ENCODE measurements at regions of chr10 and their contacts with region 1.

Region 1: DNA sequence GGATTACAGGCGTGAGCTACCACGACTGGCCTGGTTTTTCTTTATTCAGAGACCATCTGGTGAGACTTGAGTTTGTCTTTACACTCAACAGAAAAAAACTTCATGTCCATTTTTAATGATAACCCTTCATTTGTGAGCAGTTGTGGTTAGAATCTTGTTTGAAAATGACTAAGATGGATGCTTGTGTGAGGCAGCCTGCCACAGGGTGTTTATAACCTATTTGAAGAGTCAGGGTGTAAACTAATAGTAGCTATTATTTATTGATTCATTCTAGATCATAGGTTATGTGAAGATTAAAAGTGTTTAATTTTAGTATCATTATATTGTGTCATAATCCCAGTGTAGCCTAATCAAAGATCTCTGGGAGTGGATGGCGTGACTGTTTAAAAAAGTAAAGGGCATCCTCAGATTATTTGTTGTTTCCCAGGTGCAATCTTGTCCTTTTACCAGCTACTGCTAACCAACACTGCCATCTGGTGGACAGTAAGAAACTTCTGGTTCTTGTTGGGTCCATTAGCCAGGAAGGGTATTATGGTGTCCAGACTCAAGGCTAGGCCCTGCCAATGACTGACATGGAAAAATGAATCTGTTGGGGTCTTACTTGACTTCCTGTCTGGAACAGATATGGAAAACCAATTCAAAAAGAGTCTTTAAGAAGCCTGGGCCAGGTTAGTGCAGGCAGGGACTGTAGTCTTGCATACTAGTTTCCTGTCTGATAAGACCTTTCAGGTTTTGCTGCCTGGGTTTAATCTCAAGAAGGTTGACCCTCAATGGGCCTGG is 24.9 kb downstream of the NRBF2 start:
- DNase-seq: peak in 8 of 9 experiments; percentile 13 to 88 (median 48)
- ATAC-seq: peak; percentile 74
- H3K4me3 ChIP-seq: no peak overlapping the region
- H3K4me3 Mint-ChIP-seq: no peak overlapping the region
- H3K27ac ChIP-seq: no peak overlapping the region
- H3K27ac Mint-ChIP-seq: no peak overlapping the region
- H3K4me1 ChIP-seq: no peaks in the 10 kb centered on the region
- H3K4me1 Mint-ChIP-seq: peaks cover 11% of the 10 kb centered on the region
- H3K27me3 ChIP-seq: no peaks in the 10 kb centered on the region
- H3K27me3 Mint-ChIP-seq: no peaks in the 10 kb centered on the region
- CTCF ChIP-seq: peak; percentile 79

Region 2: DNA sequence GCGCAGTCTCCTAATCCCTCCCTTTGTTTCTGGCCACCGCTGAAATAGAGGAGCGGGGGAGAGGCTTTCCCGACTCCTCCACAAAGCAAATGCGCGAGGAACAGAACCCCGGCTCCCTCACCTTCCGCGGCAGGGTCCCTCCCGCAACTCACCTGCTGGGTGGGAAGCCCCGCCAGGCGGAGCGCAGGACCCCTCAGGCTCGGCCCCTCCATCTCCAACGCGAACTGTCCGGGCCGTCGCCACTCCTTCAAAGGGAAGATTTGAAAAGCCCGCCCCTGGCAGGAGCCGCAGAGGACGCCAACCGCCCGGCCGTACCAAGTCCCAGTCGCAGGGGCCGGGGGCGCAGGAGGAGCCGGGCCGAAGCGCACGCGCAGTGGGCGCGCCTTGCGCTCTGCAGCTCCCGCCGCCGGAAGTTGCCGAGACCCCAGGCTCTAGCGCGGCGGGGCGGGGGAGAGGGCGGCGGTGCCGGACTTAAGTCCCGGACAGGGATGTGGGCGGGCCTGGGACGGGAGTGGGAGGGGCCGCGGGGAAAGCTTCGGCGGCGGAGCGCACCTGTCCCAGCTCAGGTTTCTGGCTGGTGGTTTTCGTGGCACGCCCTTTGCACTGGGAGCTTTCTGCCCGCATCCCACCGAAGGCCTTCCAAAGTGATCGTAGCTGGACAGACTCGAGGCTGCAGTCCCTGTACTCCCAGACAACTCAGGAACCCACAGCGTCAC is 889.5 kb before region 1 on chr10 and contains the start of gene RTKN2:
- CTCF ChIA-PET with region 1: no interaction called
- POLR2A ChIA-PET with region 1: no interaction called
- intact Hi-C with region 1: loop called in 1 of 2 experiments (anchors 5 kb)
- DNase-seq: peak; percentile 34 to 78 (median 55)
- ATAC-seq: peak; percentile 82
- H3K4me3 ChIP-seq: peak within 1 kb of the TSS; percentile 58 to 64
- H3K4me3 Mint-ChIP-seq: peak within 1 kb of the TSS; percentile 80
- H3K27ac ChIP-seq: no peak within 1 kb of the TSS
- H3K27ac Mint-ChIP-seq: no peak within 1 kb of the TSS
- H3K4me1 ChIP-seq: peaks cover 13% of the 10 kb centered on the region
- H3K4me1 Mint-ChIP-seq: peaks cover 10% of the 10 kb centered on the region
- H3K27me3 ChIP-seq: peaks cover 0 to 7% of the 10 kb centered on the region in 2 experiments
- H3K27me3 Mint-ChIP-seq: peaks cover 12% of the 10 kb centered on the region
- CTCF ChIP-seq: no peak
- total RNA-seq, gene RTKN2: 0.49 to 0.61 TPM

Region 3: GRCh38 chr10:62554632-62555199 is 603.3 kb before region 1 on chr10:
- CTCF ChIA-PET with region 1: no interaction called
- POLR2A ChIA-PET with region 1: no interaction called
- intact Hi-C with region 1: loop called in 1 of 2 experiments (anchors 2 kb)
- DNase-seq: peak in 3 of 9 experiments; percentile 19 to 55 (median 34)
- ATAC-seq: no peak
- H3K4me3 ChIP-seq: no peak overlapping the region
- H3K4me3 Mint-ChIP-seq: no peak overlapping the region
- H3K27ac ChIP-seq: no peak overlapping the region
- H3K27ac Mint-ChIP-seq: no peak overlapping the region
- H3K4me1 ChIP-seq: no peaks in the 10 kb centered on the region
- H3K4me1 Mint-ChIP-seq: no peaks in the 10 kb centered on the region
- H3K27me3 ChIP-seq: no peaks in the 10 kb centered on the region
- H3K27me3 Mint-ChIP-seq: peaks cover 15% of the 10 kb centered on the region
- CTCF ChIP-seq: peak; percentile 41

Region 4: DNA sequence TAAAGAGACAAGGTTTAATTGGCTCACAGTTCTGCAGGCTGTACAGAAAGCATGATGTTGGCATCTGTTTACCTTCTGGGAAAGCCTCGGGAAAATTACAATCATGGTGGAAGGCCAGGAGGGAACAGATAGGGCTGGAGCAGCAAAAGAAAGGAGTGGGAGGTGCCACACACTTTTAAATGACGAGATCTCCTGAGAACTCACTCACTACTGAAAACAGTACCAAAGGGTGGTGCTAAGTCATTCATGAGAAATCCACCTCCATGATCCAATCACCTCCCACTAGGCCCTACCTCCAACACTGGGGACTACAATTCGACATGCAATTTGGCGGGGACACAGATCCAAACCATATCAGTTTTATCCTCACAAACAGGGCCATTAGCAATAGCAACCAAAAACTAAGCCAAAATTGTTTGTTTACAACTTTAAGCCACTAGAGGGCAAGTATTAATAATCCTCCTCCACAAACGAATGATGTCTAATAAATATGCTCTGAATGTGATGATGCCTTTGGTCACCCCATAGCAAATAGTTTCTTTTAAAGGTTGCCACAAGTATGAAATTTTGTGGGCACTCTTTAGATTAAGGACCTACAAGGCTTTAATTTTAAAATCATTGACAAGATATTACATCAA is 154.1 kb before region 1 on chr10:
- CTCF ChIA-PET with region 1: interaction called, 3 read pairs
- POLR2A ChIA-PET with region 1: no interaction called
- intact Hi-C with region 1: loop called (anchors 1 to 5 kb)
- DNase-seq: peak in 2 of 9 experiments; percentile 4 to 13
- ATAC-seq: no peak
- H3K4me3 ChIP-seq: no peak overlapping the region
- H3K4me3 Mint-ChIP-seq: no peak overlapping the region
- H3K27ac ChIP-seq: no peak overlapping the region
- H3K27ac Mint-ChIP-seq: no peak overlapping the region
- H3K4me1 ChIP-seq: no peaks in the 10 kb centered on the region
- H3K4me1 Mint-ChIP-seq: no peaks in the 10 kb centered on the region
- H3K27me3 ChIP-seq: peaks cover 0 to 1% of the 10 kb centered on the region in 2 experiments
- H3K27me3 Mint-ChIP-seq: peaks cover 17% of the 10 kb centered on the region
- CTCF ChIP-seq: peak; percentile 9

Region 5: DNA sequence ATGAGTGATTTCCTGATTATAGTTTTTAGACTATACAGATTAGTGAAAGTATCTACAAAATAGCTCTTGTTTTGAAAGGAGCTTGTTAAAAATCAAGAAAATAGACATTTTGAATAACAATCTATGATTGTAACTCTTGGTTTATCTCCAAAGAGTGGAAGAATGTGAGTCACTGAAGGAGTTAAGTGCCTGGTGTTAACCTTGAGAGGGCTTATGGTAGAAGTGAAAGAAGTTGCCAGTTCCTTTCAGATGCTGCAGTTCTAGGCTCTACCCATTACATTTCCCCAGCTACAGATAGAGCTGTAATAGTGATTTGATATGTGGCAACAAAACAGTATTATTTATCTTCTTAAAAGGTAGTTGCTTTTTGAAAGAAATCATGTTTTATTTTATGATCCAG is 12.3 kb before region 1 on chr10:
- CTCF ChIA-PET with region 1: interaction called, 25 read pairs
- POLR2A ChIA-PET with region 1: interaction called, 3 read pairs
- intact Hi-C with region 1: no loop called
- DNase-seq: no peak
- ATAC-seq: no peak
- H3K4me3 ChIP-seq: no peak overlapping the region
- H3K4me3 Mint-ChIP-seq: no peak overlapping the region
- H3K27ac ChIP-seq: no peak overlapping the region
- H3K27ac Mint-ChIP-seq: no peak overlapping the region
- H3K4me1 ChIP-seq: peaks cover 16% of the 10 kb centered on the region
- H3K4me1 Mint-ChIP-seq: peaks cover 52% of the 10 kb centered on the region
- H3K27me3 ChIP-seq: no peaks in the 10 kb centered on the region
- H3K27me3 Mint-ChIP-seq: no peaks in the 10 kb centered on the region
- CTCF ChIP-seq: no peak